ENCODE measurements at regions of chr16 and their contacts with region 1.

Region 1: GRCh38 chr16:67393035-67393787 is at the start of gene TPPP3:
- H3K4me3 Mint-ChIP-seq: peak within 1 kb of the TSS; percentile 53
- H3K27ac Mint-ChIP-seq: no peak within 1 kb of the TSS
- H3K4me1 Mint-ChIP-seq: peaks cover 72% of the 10 kb centered on the region
- H3K27me3 Mint-ChIP-seq: peaks cover 63% of the 10 kb centered on the region

Region 2: GRCh38 chr16:67279296-67280089 is 113.7 kb before region 1 on chr16 and contains the start of gene PLEKHG4:
- intact Hi-C with region 1: loop called (anchors 5 kb)
- H3K4me3 Mint-ChIP-seq: peak within 1 kb of the TSS; percentile 66
- H3K27ac Mint-ChIP-seq: peak within 1 kb of the TSS; percentile 39
- H3K4me1 Mint-ChIP-seq: peaks cover 20% of the 10 kb centered on the region
- H3K27me3 Mint-ChIP-seq: peaks cover 5% of the 10 kb centered on the region

Region 3: GRCh38 chr16:67415872-67416793 is 22.9 kb after region 1 on chr16 and contains the start of gene ZDHHC1:
- intact Hi-C with region 1: no loop called
- H3K4me3 Mint-ChIP-seq: peak within 1 kb of the TSS; percentile 75
- H3K27ac Mint-ChIP-seq: peak within 1 kb of the TSS; percentile 72
- H3K4me1 Mint-ChIP-seq: peaks cover 24% of the 10 kb centered on the region
- H3K27me3 Mint-ChIP-seq: peaks cover 47% of the 10 kb centered on the region

Measured in dendritic cell treated with granulocyte-macrophage colony-stimulating factor and Interleukin-4, amounts not matched to agents 40 ng/mL and 50 ng/mL, for 4 days (primary cell).